Gastrocnemius medialis (tissue), 4 donors: ENCODE measurements at regions of chr16 and their contacts with region 1.

Region 1: GRCh38 chr16:53435066-53435688 is 906 bp downstream of the RBL2 start:
- DNase-seq: peak; percentile 85 to 89
- ATAC-seq: peak; percentile 93 to 97
- H3K4me3 ChIP-seq: peak overlapping the region; percentile 94 to 100 (median 98)
- H3K27ac ChIP-seq: peak overlapping the region; percentile 96 to 99 (median 98)
- H3K4me1 ChIP-seq: peaks cover 18 to 20% of the 10 kb centered on the region in 2 donors
- H3K27me3 ChIP-seq: no peaks in the 10 kb centered on the region
- CTCF ChIP-seq: no peak
- POLR2A ChIP-seq: peak; percentile 56 to 85

Region 2: DNA sequence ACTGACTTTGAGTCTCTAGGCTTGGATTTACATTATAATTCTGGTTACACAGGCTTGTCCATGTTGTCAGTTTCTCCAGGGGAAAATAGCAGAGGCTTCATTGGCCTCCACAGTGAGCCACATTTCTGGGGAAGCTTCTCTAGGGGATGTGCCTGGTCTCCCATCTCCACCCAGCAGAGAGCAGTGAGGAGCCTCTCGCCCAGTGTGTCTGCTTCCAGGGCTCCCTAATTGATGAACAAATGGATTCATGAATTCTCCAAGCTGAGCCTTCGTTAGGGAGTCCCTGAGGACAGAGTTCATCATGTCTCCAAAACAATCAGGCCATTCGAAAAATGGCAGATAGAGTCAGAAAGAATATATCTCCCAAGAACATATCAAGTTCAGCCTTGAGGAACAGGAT is 725.9 kb before region 1 on chr16:
- in situ Hi-C with region 1: no loop called
- intact Hi-C with region 1: no loop called
- DNase-seq: no peak
- ATAC-seq: no peak
- H3K4me3 ChIP-seq: no peak overlapping the region
- H3K27ac ChIP-seq: no peak overlapping the region
- H3K4me1 ChIP-seq: no peaks in the 10 kb centered on the region
- H3K27me3 ChIP-seq: no peaks in the 10 kb centered on the region
- CTCF ChIP-seq: no peak
- POLR2A ChIP-seq: no peak

Region 3: DNA sequence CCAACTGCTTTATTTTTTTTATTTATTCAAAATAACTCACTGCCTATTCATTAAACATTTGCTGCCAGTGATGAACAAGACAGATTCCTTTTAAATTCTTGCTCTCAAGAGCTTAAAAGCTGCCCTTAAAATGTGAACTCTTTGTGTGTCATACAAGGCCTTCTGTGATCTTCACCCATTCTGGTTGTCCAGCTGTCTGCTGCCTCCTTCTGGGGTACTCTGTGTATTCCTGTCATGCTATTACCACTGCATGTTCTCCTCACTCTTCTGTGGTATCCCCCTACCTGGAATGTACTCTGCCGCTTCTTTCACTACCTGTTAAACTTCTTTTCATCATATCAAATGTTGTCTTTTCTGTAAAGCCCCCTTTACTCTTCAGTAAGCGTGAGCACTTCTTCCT is 214.6 kb before region 1 on chr16:
- in situ Hi-C with region 1: no loop called
- intact Hi-C with region 1: loop called (anchors 5 kb)
- DNase-seq: no peak
- ATAC-seq: no peak
- H3K4me3 ChIP-seq: no peak overlapping the region
- H3K27ac ChIP-seq: peak overlapping the region; percentile 9 to 71 (median 60)
- H3K4me1 ChIP-seq: peaks cover 66% of the 10 kb centered on the region in 2 donors
- H3K27me3 ChIP-seq: no peaks in the 10 kb centered on the region
- CTCF ChIP-seq: peak in 2 of 5 experiments; percentile 11 to 38
- POLR2A ChIP-seq: no peak

Region 4: GRCh38 chr16:53404959-53405358 is 30.2 kb before region 1 on chr16:
- in situ Hi-C with region 1: no loop called
- intact Hi-C with region 1: no loop called
- DNase-seq: no peak
- ATAC-seq: no peak
- H3K4me3 ChIP-seq: no peak overlapping the region
- H3K27ac ChIP-seq: no peak overlapping the region
- H3K4me1 ChIP-seq: no peaks in the 10 kb centered on the region
- H3K27me3 ChIP-seq: no peaks in the 10 kb centered on the region
- CTCF ChIP-seq: no peak
- POLR2A ChIP-seq: no peak

Region 5: GRCh38 chr16:53495325-53495724 is 60.1 kb after region 1 on chr16:
- in situ Hi-C with region 1: loop called in 2 of 4 experiments (anchors 5 to 10 kb)
- intact Hi-C with region 1: no loop called
- DNase-seq: no peak
- ATAC-seq: no peak
- H3K4me3 ChIP-seq: no peak overlapping the region
- H3K27ac ChIP-seq: no peak overlapping the region
- H3K4me1 ChIP-seq: peaks cover 6 to 8% of the 10 kb centered on the region in 2 donors
- H3K27me3 ChIP-seq: no peaks in the 10 kb centered on the region
- CTCF ChIP-seq: no peak
- POLR2A ChIP-seq: no peak

Region 6: GRCh38 chr16:53503270-53503923 is 68.2 kb after region 1 on chr16:
- in situ Hi-C with region 1: loop called in 2 of 4 experiments (anchors 5 to 10 kb)
- intact Hi-C with region 1: loop called (anchors 1 kb)
- DNase-seq: peak; percentile 100
- ATAC-seq: peak; percentile 90 to 91
- H3K4me3 ChIP-seq: peak overlapping the region; percentile 77 to 91 (median 82)
- H3K27ac ChIP-seq: peak overlapping the region; percentile 95 to 98 (median 96)
- H3K4me1 ChIP-seq: peaks cover 32 to 34% of the 10 kb centered on the region in 2 donors
- H3K27me3 ChIP-seq: no peaks in the 10 kb centered on the region
- CTCF ChIP-seq: peak in 1 of 5 experiments; percentile 5
- POLR2A ChIP-seq: peak; percentile 80 to 89

Region 7: DNA sequence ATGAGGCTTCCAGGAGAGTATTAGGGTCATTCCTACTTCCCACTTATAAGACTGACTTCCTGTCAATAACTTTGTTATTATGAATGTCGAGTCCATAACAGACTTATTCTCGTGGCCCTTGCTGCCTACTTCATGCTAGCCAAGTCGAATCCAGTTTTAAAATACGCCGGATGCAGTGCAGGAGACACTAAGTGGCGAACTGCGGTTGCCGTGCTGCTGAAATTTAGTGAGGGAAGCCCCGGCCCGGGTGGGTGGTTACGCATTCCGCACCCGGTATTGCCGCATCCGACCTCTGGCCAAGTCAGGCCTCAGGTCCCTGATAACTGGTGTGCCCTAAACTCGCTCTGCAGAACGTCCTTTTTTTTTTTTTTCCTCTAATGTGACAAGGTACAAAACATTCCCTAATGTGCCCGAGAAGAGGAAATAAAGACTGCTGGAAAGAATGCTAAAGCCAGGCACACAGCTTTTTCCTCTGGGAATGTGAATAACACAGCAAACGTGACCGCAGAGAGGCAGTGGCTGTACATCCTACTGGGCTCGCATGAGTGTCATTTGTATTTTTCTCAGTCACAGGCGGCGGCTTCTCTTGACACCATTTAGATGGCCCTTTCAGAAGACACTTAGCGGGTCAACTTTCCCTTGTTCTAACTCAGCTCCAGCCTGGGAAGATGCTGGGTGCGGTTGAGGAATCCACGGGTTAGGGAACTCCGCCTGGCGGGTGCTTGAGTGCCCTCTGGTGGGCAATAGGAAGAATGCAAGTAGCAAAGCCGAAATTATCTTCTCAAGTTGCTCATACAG is 74.9 kb after region 1 on chr16:
- in situ Hi-C with region 1: loop called in 1 of 4 experiments (anchors 10 kb)
- intact Hi-C with region 1: loop called (anchors 2 kb)
- DNase-seq: peak; percentile 35 to 57
- ATAC-seq: peak; percentile 88 to 90
- H3K4me3 ChIP-seq: peak overlapping the region in 3 of 4 donors; percentile 11 to 17 (median 14)
- H3K27ac ChIP-seq: peak overlapping the region; percentile 64 to 66 (median 64)
- H3K4me1 ChIP-seq: peaks cover 5 to 7% of the 10 kb centered on the region in 2 donors
- H3K27me3 ChIP-seq: no peaks in the 10 kb centered on the region
- CTCF ChIP-seq: peak; percentile 82 to 97 (median 85)
- POLR2A ChIP-seq: peak in 1 of 2 donors; percentile 14

Region 8: DNA sequence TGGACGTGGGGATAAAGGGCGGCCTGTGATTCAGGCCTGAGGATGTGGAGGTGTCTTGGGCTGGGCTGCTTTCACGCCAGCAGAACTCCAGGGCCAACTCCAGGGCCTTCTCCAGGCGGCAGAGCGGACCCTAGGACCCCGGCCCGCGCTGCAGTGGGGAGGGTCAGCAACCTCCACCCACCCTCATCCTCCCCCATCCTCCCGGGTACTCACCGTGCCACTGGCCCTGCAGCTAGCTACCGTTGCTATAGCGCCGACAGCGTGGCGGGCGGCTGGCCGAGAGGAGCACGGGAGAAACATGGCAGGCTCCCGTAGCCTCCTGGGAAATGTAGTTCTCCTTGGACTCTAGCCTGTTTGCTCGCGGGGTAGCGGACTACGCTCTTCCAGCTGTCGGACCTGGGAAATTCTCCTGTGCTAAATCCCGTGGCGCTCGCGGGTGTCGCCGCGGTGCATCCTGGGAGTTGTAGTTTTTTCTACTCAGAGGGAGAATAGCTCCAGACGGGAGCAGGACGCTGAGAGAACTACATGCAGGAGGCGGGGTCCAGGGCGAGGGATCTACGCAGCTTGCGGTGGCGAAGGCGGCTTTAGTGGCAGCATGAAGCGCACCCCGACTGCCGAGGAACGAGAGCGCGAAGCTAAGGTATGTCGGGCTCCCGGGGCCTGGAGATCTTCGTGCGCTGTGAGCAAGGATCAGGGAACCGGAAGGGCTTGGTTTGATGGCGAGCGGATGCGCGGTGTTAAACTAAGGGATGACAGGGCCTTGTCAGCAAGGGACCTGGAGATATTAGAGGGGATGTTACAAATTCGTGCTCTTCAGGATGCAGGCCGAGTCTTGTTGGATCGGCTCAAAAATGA is 268.6 kb after region 1 on chr16 and contains the starts of genes FTO and RPGRIP1L:
- in situ Hi-C with region 1: no loop called
- intact Hi-C with region 1: loop called (anchors 5 kb)
- DNase-seq: peak; percentile 98 to 99
- ATAC-seq: peak; percentile 99 to 100
- H3K4me3 ChIP-seq: peak within 1 kb of the TSS; percentile 85 to 98 (median 92)
- H3K27ac ChIP-seq: peak within 1 kb of the TSS; percentile 83 to 89 (median 86)
- H3K4me1 ChIP-seq: peaks cover 11 to 19% of the 10 kb centered on the region in 2 donors
- H3K27me3 ChIP-seq: no peaks in the 10 kb centered on the region
- CTCF ChIP-seq: peak in 2 of 5 experiments; percentile 30 to 32
- POLR2A ChIP-seq: peak; percentile 13 to 48
- total RNA-seq, gene FTO: 62.0 to 90.1 (median 75.1) TPM
- total RNA-seq, gene RPGRIP1L: 0.53 to 0.75 (median 0.68) TPM